Endothelial cell of umbilical vein (primary cell): ENCODE measurements at regions of chr1 and their contacts with region 1.

Region 1: GRCh38 chr1:60797351-60797750 is 285.0 kb upstream of the NFIA start:
- DNase-seq: no peak
- H3K4me3 ChIP-seq: no peak overlapping the region
- H3K27ac ChIP-seq: no peak overlapping the region
- H3K4me1 ChIP-seq: no peaks in the 10 kb centered on the region
- H3K27me3 ChIP-seq: peaks cover 0 to 7% of the 10 kb centered on the region in 2 experiments
- CTCF ChIP-seq: no peak
- POLR2A ChIP-seq: no peak

Region 2: DNA sequence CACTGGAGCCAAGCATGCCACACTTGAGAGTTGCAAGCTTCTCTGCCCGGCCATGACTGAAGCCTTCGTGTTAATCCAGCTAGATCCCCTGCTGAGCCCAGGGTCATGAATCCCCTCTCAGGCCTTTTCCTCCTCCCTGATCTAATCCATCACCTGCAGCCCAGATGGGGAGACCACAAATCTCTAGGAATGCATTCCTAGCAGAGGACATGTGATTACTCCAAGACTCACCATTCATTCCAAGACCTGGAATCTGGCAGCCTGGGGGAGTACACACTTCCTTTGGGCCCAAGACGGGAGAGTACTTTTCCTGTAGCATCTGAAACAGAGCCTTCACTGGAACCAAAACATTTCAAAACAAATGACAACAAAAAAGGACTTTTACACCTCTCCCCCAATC is 15.7 kb after region 1 on chr1:
- CTCF ChIA-PET with region 1: interaction called, 5 read pairs
- POLR2A ChIA-PET with region 1: no interaction called
- dilution Hi-C with region 1: no loop called
- intact Hi-C with region 1: loop called (anchors 2 kb)
- DNase-seq: no peak
- H3K4me3 ChIP-seq: no peak overlapping the region
- H3K27ac ChIP-seq: no peak overlapping the region
- H3K4me1 ChIP-seq: no peaks in the 10 kb centered on the region
- H3K27me3 ChIP-seq: no peaks in the 10 kb centered on the region
- CTCF ChIP-seq: no peak
- POLR2A ChIP-seq: no peak

Region 3: GRCh38 chr1:60978421-60979357 is 181.3 kb after region 1 on chr1:
- CTCF ChIA-PET with region 1: no interaction called
- POLR2A ChIA-PET with region 1: no interaction called
- dilution Hi-C with region 1: no loop called
- intact Hi-C with region 1: no loop called
- DNase-seq: peak; percentile 69
- H3K4me3 ChIP-seq: no peak overlapping the region
- H3K27ac ChIP-seq: no peak overlapping the region
- H3K4me1 ChIP-seq: peaks cover 6% of the 10 kb centered on the region
- H3K27me3 ChIP-seq: no peaks in the 10 kb centered on the region
- CTCF ChIP-seq: peak; percentile 60 to 77
- POLR2A ChIP-seq: no peak